ENCODE measurements at regions of chr6 and their contacts with region 1.

Region 1: GRCh38 chr6:3013479-3013878 is 13.8 kb downstream of the NQO2 start:
- DNase-seq: no peak
- H3K4me3 ChIP-seq: no peak overlapping the region
- H3K27ac ChIP-seq: no peak overlapping the region
- H3K4me1 ChIP-seq: no peaks in the 10 kb centered on the region
- H3K27me3 ChIP-seq: no peaks in the 10 kb centered on the region
- CTCF ChIP-seq: no peak
- POLR2A ChIP-seq: no peak

Region 2: DNA sequence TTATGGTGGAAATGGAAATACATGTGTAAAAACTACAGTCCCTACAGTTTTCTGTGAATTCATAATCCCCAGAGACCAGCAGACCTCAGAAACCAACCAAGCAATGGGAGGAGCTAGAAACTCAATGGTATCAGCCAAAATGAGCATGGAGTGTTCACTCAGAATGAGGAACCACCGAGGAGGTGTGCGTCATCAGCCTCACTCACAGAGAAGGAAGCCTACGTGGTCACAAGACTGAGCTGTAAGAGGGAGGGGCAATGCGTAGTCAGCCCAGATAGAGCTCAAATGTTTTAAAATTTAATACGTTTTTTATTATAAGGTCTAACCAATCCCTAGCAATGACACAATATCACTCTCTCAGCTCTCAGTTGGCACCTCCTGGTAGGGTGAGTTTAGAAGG is 280.2 kb before region 1 on chr6:
- intact Hi-C with region 1: no loop called
- DNase-seq: no peak
- H3K4me3 ChIP-seq: no peak overlapping the region
- H3K27ac ChIP-seq: no peak overlapping the region
- H3K4me1 ChIP-seq: no peaks in the 10 kb centered on the region
- H3K27me3 ChIP-seq: no peaks in the 10 kb centered on the region
- CTCF ChIP-seq: no peak
- POLR2A ChIP-seq: no peak

Region 3: DNA sequence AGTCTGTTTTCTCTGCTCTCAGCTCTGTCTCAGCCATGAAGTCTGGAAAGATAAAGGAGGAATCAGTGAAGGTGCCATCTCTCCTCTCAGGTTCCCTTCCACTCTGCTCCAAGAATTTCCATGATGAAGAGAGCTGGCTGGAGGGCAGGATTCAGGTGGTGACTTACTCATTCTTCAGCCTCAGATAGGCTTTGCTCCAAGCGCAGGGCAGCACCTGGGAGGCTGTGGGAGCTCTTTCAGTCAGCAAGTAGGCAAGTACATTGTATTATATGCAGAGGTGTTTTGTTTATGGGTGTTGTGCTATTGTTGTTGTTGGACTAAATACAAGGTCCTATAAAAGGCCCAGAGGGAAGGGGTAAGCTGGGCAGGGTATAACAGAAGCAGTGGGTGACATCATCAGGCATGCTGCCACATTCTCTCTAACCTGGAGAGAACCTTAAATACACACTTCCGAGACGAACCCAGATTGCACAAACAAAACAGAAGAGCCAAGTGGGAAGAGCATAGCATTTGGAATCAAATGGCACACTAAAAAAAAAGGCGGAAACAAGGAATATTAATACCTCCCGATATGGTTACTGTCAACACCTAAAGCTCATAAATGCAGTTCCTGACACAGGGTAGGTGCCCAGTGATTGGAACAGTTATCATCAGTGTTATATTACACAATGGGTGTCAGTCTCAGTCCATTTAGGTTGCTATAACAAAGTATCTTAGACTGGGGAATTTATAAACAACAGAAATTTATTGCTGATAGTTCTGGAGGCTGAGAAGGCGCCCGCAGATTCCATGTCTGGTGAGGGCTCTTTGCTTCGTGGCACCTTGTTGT is 230.7 kb after region 1 on chr6:
- intact Hi-C with region 1: no loop called
- DNase-seq: no peak
- H3K4me3 ChIP-seq: no peak overlapping the region
- H3K27ac ChIP-seq: no peak overlapping the region
- H3K4me1 ChIP-seq: no peaks in the 10 kb centered on the region
- H3K27me3 ChIP-seq: no peaks in the 10 kb centered on the region
- CTCF ChIP-seq: no peak
- POLR2A ChIP-seq: no peak

Region 4: DNA sequence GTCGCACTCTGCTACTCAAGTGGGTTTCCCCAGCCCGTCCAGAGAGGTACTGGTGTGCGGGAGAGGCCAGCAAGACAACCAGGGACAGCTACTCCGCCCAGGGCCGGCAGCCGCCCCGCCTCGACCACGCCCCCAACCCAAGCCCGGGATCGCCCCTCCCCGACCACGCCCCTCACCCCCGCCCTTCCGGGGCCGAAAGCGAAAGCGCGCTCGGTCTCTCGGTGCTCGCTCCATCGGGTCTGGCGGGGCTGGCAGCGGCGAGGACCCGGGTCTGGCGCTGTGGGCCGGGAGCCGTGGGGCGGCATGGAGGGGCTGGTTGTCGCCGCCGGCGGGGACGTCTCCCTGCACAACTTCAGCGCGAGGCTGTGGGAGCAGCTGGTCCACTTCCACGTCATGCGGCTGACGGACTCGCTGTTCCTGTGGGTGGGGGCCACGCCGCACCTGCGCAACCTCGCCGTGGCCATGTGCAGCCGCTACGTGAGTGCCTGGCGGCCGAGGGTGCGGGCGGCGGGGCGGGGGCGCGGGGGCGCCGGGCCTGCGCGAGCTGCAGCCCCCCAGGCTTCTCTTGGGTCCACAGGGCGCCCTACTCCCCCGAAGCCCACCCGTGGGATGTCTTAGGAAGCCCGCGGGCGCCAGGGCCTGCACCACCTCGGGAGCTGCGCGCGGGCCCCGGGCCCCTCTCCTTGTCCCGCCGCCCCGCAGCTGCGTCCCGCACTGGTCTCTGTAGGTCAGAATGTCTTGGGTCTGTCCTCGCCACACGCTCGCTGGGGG is 245.4 kb after region 1 on chr6 and contains the start of gene PSMG4:
- intact Hi-C with region 1: loop called (anchors 10 kb)
- DNase-seq: peak; percentile 93
- H3K4me3 ChIP-seq: peak within 1 kb of the TSS; percentile 91 to 92
- H3K27ac ChIP-seq: peak within 1 kb of the TSS; percentile 72 to 87
- H3K4me1 ChIP-seq: no peaks in the 10 kb centered on the region
- H3K27me3 ChIP-seq: no peaks in the 10 kb centered on the region
- CTCF ChIP-seq: no peak
- POLR2A ChIP-seq: peak; percentile 43
- total RNA-seq, gene PSMG4: 20.8 to 30.1 TPM

Measured in prostate gland (tissue), 2 donors.